ENCODE measurements at regions of chrX and their contacts with region 1.

Region 1: DNA sequence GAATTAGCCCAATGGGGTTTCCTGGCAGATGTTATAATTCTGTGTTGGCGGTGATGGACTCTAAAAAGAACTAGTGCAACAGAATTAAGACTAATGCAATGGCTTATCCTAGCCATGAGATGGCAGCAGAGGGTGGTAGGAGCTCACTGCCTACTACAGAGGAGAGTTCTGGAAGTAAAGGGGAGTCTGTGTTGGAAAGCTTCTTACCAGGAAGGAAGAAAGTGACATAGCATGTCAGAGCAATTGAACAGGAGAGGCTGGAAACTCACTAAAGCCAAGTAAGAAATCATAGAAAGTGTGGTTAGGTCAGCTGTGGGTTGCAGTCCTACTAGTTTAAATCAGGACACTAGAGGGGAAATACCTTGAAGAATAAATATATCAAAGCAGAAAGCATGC is 6.3 kb upstream of the TRPC5OS start:
- DNase-seq: peak; percentile 44
- H3K4me3 ChIP-seq: no peak overlapping the region
- H3K27ac ChIP-seq: no peak overlapping the region
- H3K4me1 ChIP-seq: no peaks in the 10 kb centered on the region
- H3K27me3 ChIP-seq: peaks cover 4% of the 10 kb centered on the region; the same call in 1 of the 2 replicates
- CTCF ChIP-seq: peak; percentile 77
- EP300 ChIP-seq: no peak
- RAD21 ChIP-seq: peak; percentile 86

Region 2: GRCh38 chrX:110985485-110985884 is 884.2 kb before region 1 on chrX:
- CTCF ChIA-PET with region 1: no interaction called
- POLR2A ChIA-PET with region 1: no interaction called
- DNase-seq: no peak
- H3K4me3 ChIP-seq: no peak overlapping the region
- H3K27ac ChIP-seq: no peak overlapping the region
- H3K4me1 ChIP-seq: no peaks in the 10 kb centered on the region; a peak in 1 of 4 replicates
- H3K27me3 ChIP-seq: no peaks in the 10 kb centered on the region; the same call in 1 of the 2 replicates
- CTCF ChIP-seq: no peak
- EP300 ChIP-seq: no peak
- RAD21 ChIP-seq: no peak

Region 3: GRCh38 chrX:111854778-111855490 is 14.7 kb before region 1 on chrX:
- CTCF ChIA-PET with region 1: interaction called, 11 read pairs
- POLR2A ChIA-PET with region 1: no interaction called
- DNase-seq: peak; percentile 4
- H3K4me3 ChIP-seq: no peak overlapping the region
- H3K27ac ChIP-seq: no peak overlapping the region
- H3K4me1 ChIP-seq: no peaks in the 10 kb centered on the region
- H3K27me3 ChIP-seq: peaks cover 16% of the 10 kb centered on the region; the same call in 1 of the 2 replicates
- CTCF ChIP-seq: no peak
- EP300 ChIP-seq: no peak
- RAD21 ChIP-seq: no peak

Region 4: DNA sequence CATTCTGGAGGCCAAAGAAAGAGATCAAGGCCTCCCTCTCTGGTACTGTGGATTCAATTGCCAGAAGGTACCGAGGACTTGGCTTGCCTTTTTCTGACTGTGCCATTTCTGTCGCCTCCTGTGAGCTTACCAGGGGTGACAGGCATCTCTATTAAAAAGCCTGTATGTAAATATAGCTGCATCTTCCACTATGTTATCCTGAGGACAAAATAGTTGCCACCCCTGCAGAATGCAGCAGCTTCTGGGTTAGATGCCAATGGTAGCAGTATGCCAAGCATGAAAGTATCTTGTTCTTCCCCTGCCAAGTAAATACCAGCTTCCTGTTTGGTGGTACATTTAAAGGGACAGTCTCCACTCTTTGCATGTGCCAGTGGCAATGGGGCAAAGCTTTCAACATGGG is 17.0 kb after region 1 on chrX:
- CTCF ChIA-PET with region 1: interaction called, 12 read pairs
- POLR2A ChIA-PET with region 1: no interaction called
- DNase-seq: no peak
- H3K4me3 ChIP-seq: no peak overlapping the region
- H3K27ac ChIP-seq: no peak overlapping the region
- H3K4me1 ChIP-seq: no peaks in the 10 kb centered on the region
- H3K27me3 ChIP-seq: no peaks in the 10 kb centered on the region
- CTCF ChIP-seq: no peak
- EP300 ChIP-seq: no peak
- RAD21 ChIP-seq: no peak

Region 5: GRCh38 chrX:111955901-111956300 is 86.3 kb after region 1 on chrX:
- CTCF ChIA-PET with region 1: no interaction called
- POLR2A ChIA-PET with region 1: no interaction called
- DNase-seq: no peak
- H3K4me3 ChIP-seq: no peak overlapping the region
- H3K27ac ChIP-seq: no peak overlapping the region
- H3K4me1 ChIP-seq: no peaks in the 10 kb centered on the region; a peak in 1 of 4 replicates
- H3K27me3 ChIP-seq: no peaks in the 10 kb centered on the region; the same call in 1 of the 2 replicates
- CTCF ChIP-seq: no peak
- EP300 ChIP-seq: no peak
- RAD21 ChIP-seq: no peak

Region 6: GRCh38 chrX:112391313-112391712 is 521.7 kb after region 1 on chrX:
- CTCF ChIA-PET with region 1: no interaction called
- POLR2A ChIA-PET with region 1: no interaction called
- DNase-seq: no peak
- H3K4me3 ChIP-seq: no peak overlapping the region
- H3K27ac ChIP-seq: no peak overlapping the region
- H3K4me1 ChIP-seq: no peaks in the 10 kb centered on the region
- H3K27me3 ChIP-seq: no peaks in the 10 kb centered on the region
- CTCF ChIP-seq: no peak
- EP300 ChIP-seq: no peak
- RAD21 ChIP-seq: no peak

Measured in SK-N-SH (cell line).